ENCODE measurements at regions of chr2 and their contacts with region 1.

Region 1: GRCh38 chr2:175036582-175037018 is 31.4 kb upstream of the CHN1 start:
- DNase-seq: peak in 6 of 9 donors; percentile 22 to 56 (median 44)
- ATAC-seq: peak; percentile 81
- H3K4me3 ChIP-seq: no peak overlapping the region
- H3K4me3 Mint-ChIP-seq: peak overlapping the region in 9 of 10 donors; percentile 42 to 79 (median 70)
- H3K27ac ChIP-seq: no peak overlapping the region
- H3K27ac Mint-ChIP-seq: peak overlapping the region in 8 of 9 donors; percentile 49 to 91 (median 70)
- H3K4me1 ChIP-seq: no peaks in the 10 kb centered on the region
- H3K4me1 Mint-ChIP-seq: peaks cover 4 to 20% (median 14%) of the 10 kb centered on the region in 7 donors
- H3K27me3 ChIP-seq: no peaks in the 10 kb centered on the region
- H3K27me3 Mint-ChIP-seq: peaks cover 0 to 2% (median 0%) of the 10 kb centered on the region in 5 donors

Region 2: GRCh38 chr2:174827371-174828369 is 208.9 kb before region 1 on chr2:
- CTCF ChIA-PET with region 1: no interaction called
- POLR2A ChIA-PET with region 1: no interaction called
- intact Hi-C with region 1: no loop called
- DNase-seq: no peak
- ATAC-seq: no peak
- H3K4me3 ChIP-seq: no peak overlapping the region
- H3K4me3 Mint-ChIP-seq: no peak overlapping the region
- H3K27ac ChIP-seq: no peak overlapping the region
- H3K27ac Mint-ChIP-seq: peak overlapping the region in 1 of 9 donors; percentile 37
- H3K4me1 ChIP-seq: no peaks in the 10 kb centered on the region
- H3K4me1 Mint-ChIP-seq: no peaks in the 10 kb centered on the region
- H3K27me3 ChIP-seq: no peaks in the 10 kb centered on the region
- H3K27me3 Mint-ChIP-seq: peaks cover 0 to 3% (median 0%) of the 10 kb centered on the region in 5 donors

Region 3: DNA sequence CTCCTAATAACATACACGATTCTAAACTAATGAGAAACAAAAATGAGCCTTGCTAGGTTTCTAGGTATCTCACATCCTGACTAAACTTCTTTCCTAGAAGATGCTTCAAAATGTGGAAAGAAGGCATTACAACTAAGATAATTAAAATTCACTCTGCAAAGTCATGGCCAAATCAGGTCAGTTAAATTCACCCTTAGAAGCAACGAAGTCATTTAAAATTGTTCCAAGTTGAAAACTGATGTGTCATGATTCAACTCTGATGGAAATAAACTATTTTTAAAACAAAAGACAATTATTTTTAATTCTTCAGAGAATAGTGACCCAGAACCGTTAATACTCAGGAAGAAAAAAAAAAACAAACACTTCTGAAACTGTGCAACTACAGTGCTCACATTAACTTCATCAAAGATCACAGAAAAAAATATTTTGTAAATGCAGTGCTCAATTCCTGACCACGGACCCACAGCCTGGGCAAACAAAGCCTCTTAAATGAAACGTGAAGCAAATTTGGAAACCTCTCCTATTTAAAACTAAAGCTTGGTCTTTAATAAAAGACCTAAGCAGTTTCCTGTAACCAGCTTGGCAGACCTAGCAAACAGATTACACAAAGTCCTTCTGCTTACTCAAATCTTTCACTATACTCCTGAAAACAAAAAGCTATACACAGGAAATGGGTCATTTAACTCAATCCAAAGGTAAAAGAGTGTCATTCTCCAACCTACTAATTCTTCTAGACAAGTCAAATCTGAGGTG is 70.4 kb before region 1 on chr2:
- CTCF ChIA-PET with region 1: no interaction called
- POLR2A ChIA-PET with region 1: no interaction called
- intact Hi-C with region 1: no loop called
- DNase-seq: no peak
- ATAC-seq: no peak
- H3K4me3 ChIP-seq: no peak overlapping the region
- H3K4me3 Mint-ChIP-seq: no peak overlapping the region
- H3K27ac ChIP-seq: no peak overlapping the region
- H3K27ac Mint-ChIP-seq: no peak overlapping the region
- H3K4me1 ChIP-seq: peaks cover 0 to 5% of the 10 kb centered on the region in 2 donors
- H3K4me1 Mint-ChIP-seq: peaks cover 6 to 23% (median 13%) of the 10 kb centered on the region in 7 donors
- H3K27me3 ChIP-seq: no peaks in the 10 kb centered on the region
- H3K27me3 Mint-ChIP-seq: peaks cover 0 to 10% (median 7%) of the 10 kb centered on the region in 5 donors

Region 4: GRCh38 chr2:174997110-174997509 is 39.5 kb before region 1 on chr2:
- CTCF ChIA-PET with region 1: no interaction called
- POLR2A ChIA-PET with region 1: no interaction called
- intact Hi-C with region 1: no loop called
- DNase-seq: no peak
- ATAC-seq: no peak
- H3K4me3 ChIP-seq: no peak overlapping the region
- H3K4me3 Mint-ChIP-seq: no peak overlapping the region
- H3K27ac ChIP-seq: no peak overlapping the region
- H3K27ac Mint-ChIP-seq: no peak overlapping the region
- H3K4me1 ChIP-seq: no peaks in the 10 kb centered on the region
- H3K4me1 Mint-ChIP-seq: peaks cover 0 to 6% (median 0%) of the 10 kb centered on the region in 7 donors
- H3K27me3 ChIP-seq: no peaks in the 10 kb centered on the region
- H3K27me3 Mint-ChIP-seq: peaks cover 32 to 45% (median 37%) of the 10 kb centered on the region in 5 donors

Region 5: GRCh38 chr2:175181104-175181876 is 144.7 kb after region 1 on chr2 and contains the start of gene ATP5MC3:
- CTCF ChIA-PET with region 1: no interaction called
- POLR2A ChIA-PET with region 1: no interaction called
- intact Hi-C with region 1: loop called in 1 of 2 experiments (anchors 5 kb)
- DNase-seq: peak; percentile 83 to 92 (median 89)
- ATAC-seq: peak; percentile 93
- H3K4me3 ChIP-seq: peak within 1 kb of the TSS; percentile 84
- H3K4me3 Mint-ChIP-seq: peak within 1 kb of the TSS; percentile 77 to 96 (median 88)
- H3K27ac ChIP-seq: peak within 1 kb of the TSS; percentile 89
- H3K27ac Mint-ChIP-seq: peak within 1 kb of the TSS; percentile 86 to 99 (median 93)
- H3K4me1 ChIP-seq: peaks cover 6 to 13% of the 10 kb centered on the region in 2 donors
- H3K4me1 Mint-ChIP-seq: peaks cover 14 to 39% (median 32%) of the 10 kb centered on the region in 7 donors
- H3K27me3 ChIP-seq: no peaks in the 10 kb centered on the region
- H3K27me3 Mint-ChIP-seq: no peaks in the 10 kb centered on the region
- total RNA-seq, gene ATP5MC3: 70.3 to 220 (median 77.6) TPM

Region 6: GRCh38 chr2:175187378-175187777 is 150.8 kb after region 1 on chr2:
- CTCF ChIA-PET with region 1: no interaction called
- POLR2A ChIA-PET with region 1: no interaction called
- intact Hi-C with region 1: loop called (anchors 1 to 5 kb)
- DNase-seq: peak in 5 of 9 donors; percentile 11 to 42 (median 22)
- ATAC-seq: peak; percentile 53
- H3K4me3 ChIP-seq: no peak overlapping the region
- H3K4me3 Mint-ChIP-seq: no peak overlapping the region
- H3K27ac ChIP-seq: no peak overlapping the region
- H3K27ac Mint-ChIP-seq: no peak overlapping the region
- H3K4me1 ChIP-seq: no peaks in the 10 kb centered on the region
- H3K4me1 Mint-ChIP-seq: peaks cover 0 to 3% (median 0%) of the 10 kb centered on the region in 7 donors
- H3K27me3 ChIP-seq: no peaks in the 10 kb centered on the region
- H3K27me3 Mint-ChIP-seq: peaks cover 12 to 29% (median 19%) of the 10 kb centered on the region in 5 donors

Region 7: DNA sequence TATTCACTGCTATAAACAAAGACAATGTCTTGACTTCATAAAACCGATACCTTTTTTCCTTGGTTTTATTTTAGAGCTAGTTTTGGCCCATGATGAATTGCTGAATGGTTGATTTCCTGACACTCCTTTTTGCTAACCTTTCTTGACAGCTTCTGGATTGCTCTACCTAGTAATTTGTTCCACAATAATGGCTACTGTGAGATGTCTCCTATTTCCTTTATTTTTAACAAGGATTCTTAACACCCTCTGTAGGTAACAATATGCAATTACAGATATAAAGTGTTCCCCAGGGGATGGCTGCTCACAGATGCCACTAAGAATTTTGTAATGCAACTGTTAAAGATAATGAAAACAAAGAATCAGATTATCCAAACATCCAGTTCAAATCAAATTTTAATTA is 245.7 kb after region 1 on chr2:
- CTCF ChIA-PET with region 1: no interaction called
- POLR2A ChIA-PET with region 1: no interaction called
- intact Hi-C with region 1: loop called (anchors 1 kb)
- DNase-seq: peak in 5 of 9 donors; percentile 4 to 16 (median 7)
- ATAC-seq: peak; percentile 61
- H3K4me3 ChIP-seq: no peak overlapping the region
- H3K4me3 Mint-ChIP-seq: no peak overlapping the region
- H3K27ac ChIP-seq: no peak overlapping the region
- H3K27ac Mint-ChIP-seq: no peak overlapping the region
- H3K4me1 ChIP-seq: no peaks in the 10 kb centered on the region
- H3K4me1 Mint-ChIP-seq: no peaks in the 10 kb centered on the region
- H3K27me3 ChIP-seq: no peaks in the 10 kb centered on the region
- H3K27me3 Mint-ChIP-seq: peaks cover 0 to 15% (median 3%) of the 10 kb centered on the region in 5 donors

Region 8: GRCh38 chr2:176151442-176152369 is 1115.1 kb after region 1 on chr2 and contains the start of gene HOXD4:
- CTCF ChIA-PET with region 1: no interaction called
- POLR2A ChIA-PET with region 1: no interaction called
- intact Hi-C with region 1: no loop called
- DNase-seq: no peak
- ATAC-seq: no peak
- H3K4me3 ChIP-seq: no peak within 1 kb of the TSS
- H3K4me3 Mint-ChIP-seq: peak within 1 kb of the TSS in 5 of 10 donors; percentile 2 to 23 (median 15)
- H3K27ac ChIP-seq: no peak within 1 kb of the TSS
- H3K27ac Mint-ChIP-seq: no peak within 1 kb of the TSS
- H3K4me1 ChIP-seq: no peaks in the 10 kb centered on the region
- H3K4me1 Mint-ChIP-seq: peaks cover 0 to 17% (median 8%) of the 10 kb centered on the region in 7 donors
- H3K27me3 ChIP-seq: peaks cover 10 to 45% of the 10 kb centered on the region in 2 donors
- H3K27me3 Mint-ChIP-seq: peaks cover 79 to 95% (median 86%) of the 10 kb centered on the region in 5 donors
- total RNA-seq, gene HOXD4: not detected